Activated CD4-positive, alpha-beta T cell treated with anti-CD3 and anti-CD28 coated beads for 36 hours (primary cell): ENCODE measurements at regions of chr3 and their contacts with region 1.

Region 1: GRCh38 chr3:56753206-56753820 is 48.4 kb downstream of the ARHGEF3 start:
- DNase-seq: peak; percentile 66
- ATAC-seq: peak; percentile 98
- H3K4me3 Mint-ChIP-seq: peak overlapping the region; percentile 21
- H3K27ac Mint-ChIP-seq: peak overlapping the region; percentile 70
- H3K4me1 Mint-ChIP-seq: peaks cover 59% of the 10 kb centered on the region
- H3K27me3 Mint-ChIP-seq: no peaks in the 10 kb centered on the region

Region 2: DNA sequence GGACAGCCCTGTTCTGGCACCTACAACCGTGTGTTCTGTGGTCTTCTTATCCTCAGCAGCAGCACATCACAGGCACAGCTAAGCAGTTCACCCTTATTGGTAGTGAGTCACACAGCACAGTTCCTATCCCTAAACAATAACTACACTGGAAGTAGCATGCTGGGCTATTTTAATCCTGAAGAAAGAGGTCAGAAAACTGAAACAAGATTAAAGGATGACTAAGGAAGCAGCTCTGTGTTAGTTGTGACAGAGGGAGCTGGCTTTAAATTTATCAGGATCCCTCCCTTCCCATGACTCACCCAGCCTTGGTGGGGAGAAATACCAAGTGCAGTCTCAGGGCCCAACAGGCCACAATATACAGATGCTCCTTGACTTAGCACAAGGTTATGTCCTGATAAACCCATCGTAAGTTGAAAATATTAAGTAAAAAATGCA is 429.3 kb before region 1 on chr3:
- CTCF ChIA-PET with region 1: no interaction called
- POLR2A ChIA-PET with region 1: no interaction called
- intact Hi-C with region 1: no loop called
- DNase-seq: no peak
- ATAC-seq: no peak
- H3K4me3 Mint-ChIP-seq: no peak overlapping the region
- H3K27ac Mint-ChIP-seq: no peak overlapping the region
- H3K4me1 Mint-ChIP-seq: no peaks in the 10 kb centered on the region
- H3K27me3 Mint-ChIP-seq: peaks cover 12% of the 10 kb centered on the region

Region 3: DNA sequence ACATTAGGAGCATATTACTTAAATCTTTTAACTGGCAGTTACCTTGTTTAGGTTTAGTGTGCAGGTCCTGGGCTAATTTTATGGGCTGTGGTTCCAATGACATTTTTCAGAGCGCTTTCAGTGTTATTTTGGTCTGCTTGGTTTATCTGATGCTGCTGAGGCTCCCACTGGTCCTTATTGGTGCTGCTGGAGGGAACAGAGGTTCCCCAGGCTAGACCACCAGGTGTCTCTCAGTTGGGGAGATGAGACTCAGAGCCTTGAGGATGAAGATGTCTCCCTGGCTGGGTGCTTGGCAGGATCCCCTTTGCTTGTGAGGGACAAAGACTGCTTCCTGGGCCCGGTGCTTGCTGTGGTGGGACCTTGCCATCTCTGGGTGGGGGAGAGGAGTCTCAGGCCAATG is 42.0 kb before region 1 on chr3:
- CTCF ChIA-PET with region 1: interaction called, 3 read pairs
- POLR2A ChIA-PET with region 1: no interaction called
- intact Hi-C with region 1: loop called in 1 of 2 experiments (anchors 5 kb)
- DNase-seq: no peak
- ATAC-seq: no peak
- H3K4me3 Mint-ChIP-seq: no peak overlapping the region
- H3K27ac Mint-ChIP-seq: no peak overlapping the region
- H3K4me1 Mint-ChIP-seq: no peaks in the 10 kb centered on the region
- H3K27me3 Mint-ChIP-seq: no peaks in the 10 kb centered on the region

Region 4: GRCh38 chr3:56725175-56725574 is 28.1 kb before region 1 on chr3:
- CTCF ChIA-PET with region 1: interaction called, 5 read pairs
- POLR2A ChIA-PET with region 1: no interaction called
- intact Hi-C with region 1: loop called (anchors 1 to 2 kb)
- DNase-seq: peak; percentile 82
- ATAC-seq: peak; percentile 94
- H3K4me3 Mint-ChIP-seq: peak overlapping the region; percentile 24
- H3K27ac Mint-ChIP-seq: peak overlapping the region; percentile 88
- H3K4me1 Mint-ChIP-seq: peaks cover 30% of the 10 kb centered on the region
- H3K27me3 Mint-ChIP-seq: no peaks in the 10 kb centered on the region

Region 5: DNA sequence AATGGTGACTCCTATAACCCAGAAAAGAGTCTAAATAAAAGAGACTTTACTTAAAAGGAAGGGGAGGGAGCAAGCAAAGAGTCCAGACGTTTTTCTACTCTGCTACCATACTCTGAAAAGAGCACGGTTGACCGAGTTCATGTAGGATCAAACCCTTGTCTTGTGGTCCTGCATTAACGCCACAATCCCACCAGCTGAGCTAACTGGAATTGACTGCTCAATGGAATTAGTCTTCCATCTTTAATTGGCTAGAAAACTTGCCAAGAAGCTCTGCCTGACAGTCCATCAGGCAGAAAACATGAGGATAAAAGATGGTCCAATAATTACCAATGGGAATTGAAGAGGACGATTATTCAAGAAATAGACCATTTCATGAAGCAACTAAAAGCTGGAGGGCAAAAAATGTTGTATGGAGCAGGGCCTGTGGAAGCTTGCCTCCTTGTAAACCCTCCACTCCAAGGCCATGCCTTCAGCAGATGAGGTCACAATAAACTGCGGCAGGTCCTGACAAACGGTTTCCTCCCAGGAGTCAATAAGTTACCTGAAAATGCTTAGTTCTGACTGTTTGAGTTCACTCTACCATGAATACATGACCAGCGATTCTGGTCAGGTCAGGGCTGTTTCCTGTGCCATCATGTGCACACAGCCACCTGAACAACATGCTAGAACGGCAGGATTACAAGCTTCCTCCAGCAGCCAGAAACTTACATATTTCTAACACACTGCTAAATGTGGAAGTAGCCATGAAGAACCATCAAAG is 84.1 kb after region 1 on chr3:
- CTCF ChIA-PET with region 1: no interaction called
- POLR2A ChIA-PET with region 1: no interaction called
- intact Hi-C with region 1: no loop called
- DNase-seq: peak; percentile 23
- ATAC-seq: peak; percentile 66
- H3K4me3 Mint-ChIP-seq: no peak overlapping the region
- H3K27ac Mint-ChIP-seq: no peak overlapping the region
- H3K4me1 Mint-ChIP-seq: peaks cover 28% of the 10 kb centered on the region
- H3K27me3 Mint-ChIP-seq: no peaks in the 10 kb centered on the region